Lower leg skin (tissue), 4 donors: ENCODE measurements at regions of chrX and their contacts with region 1.

Region 1: GRCh38 chrX:48854898-48855297 is 19.5 kb upstream of the PCSK1N start:
- DNase-seq: no peak
- H3K4me3 ChIP-seq: no peak overlapping the region
- CTCF ChIP-seq: no peak
- POLR2A ChIP-seq: no peak

Region 2: DNA sequence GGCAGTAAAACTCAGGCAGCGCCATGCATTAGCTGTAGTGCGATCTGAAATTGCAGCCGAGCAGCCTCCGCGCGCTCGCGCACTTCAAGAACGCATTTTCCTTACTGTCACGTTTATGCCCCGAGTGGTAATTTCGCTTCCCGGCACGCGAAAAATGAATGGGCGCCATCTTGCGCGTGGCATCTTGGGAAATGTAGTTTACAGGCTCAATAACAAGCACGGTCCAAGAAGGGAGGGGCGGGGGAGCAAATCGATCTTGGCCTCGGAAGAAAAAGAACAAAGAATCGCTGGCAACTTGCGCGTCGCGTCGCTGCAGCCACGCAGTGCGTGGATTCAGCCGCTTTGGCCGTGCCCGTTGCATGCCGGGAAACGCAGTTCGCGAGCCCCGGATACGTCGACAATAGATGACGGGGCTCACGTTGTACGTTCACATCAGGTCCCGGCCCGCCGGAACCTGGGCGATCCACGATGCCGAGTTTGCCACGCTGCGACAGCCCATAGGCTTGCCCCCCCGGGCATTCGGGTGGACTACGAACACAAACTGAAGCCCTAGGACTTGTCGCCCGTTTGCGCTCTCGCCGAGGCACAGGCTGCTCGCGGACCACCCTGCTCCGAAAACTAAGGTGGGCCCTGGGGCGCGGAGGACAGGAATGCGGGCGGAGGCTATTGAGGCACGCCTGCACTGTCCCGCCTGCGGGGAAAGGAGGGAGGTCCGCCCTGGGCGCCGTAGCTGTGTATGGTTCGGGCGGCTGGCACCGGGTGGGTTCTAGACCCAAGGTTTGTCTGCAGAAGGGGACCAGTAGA is 378.9 kb before region 1 on chrX and contains the start of gene FTSJ1:
- intact Hi-C with region 1: no loop called
- DNase-seq: peak; percentile 89 to 97
- H3K4me3 ChIP-seq: peak within 1 kb of the TSS; percentile 66
- CTCF ChIP-seq: no peak
- POLR2A ChIP-seq: no peak
- total RNA-seq, gene FTSJ1: 29.8 to 46.4 (median 42.2) TPM

Region 3: GRCh38 chrX:50075630-50076339 is 1220.9 kb after region 1 on chrX:
- intact Hi-C with region 1: loop called (anchors 5 kb)
- DNase-seq: no peak
- H3K4me3 ChIP-seq: no peak overlapping the region
- CTCF ChIP-seq: no peak
- POLR2A ChIP-seq: no peak